Astrocyte of the cerebellum (primary cell): ENCODE measurements at regions of chr17 and their contacts with region 1.

Region 1: DNA sequence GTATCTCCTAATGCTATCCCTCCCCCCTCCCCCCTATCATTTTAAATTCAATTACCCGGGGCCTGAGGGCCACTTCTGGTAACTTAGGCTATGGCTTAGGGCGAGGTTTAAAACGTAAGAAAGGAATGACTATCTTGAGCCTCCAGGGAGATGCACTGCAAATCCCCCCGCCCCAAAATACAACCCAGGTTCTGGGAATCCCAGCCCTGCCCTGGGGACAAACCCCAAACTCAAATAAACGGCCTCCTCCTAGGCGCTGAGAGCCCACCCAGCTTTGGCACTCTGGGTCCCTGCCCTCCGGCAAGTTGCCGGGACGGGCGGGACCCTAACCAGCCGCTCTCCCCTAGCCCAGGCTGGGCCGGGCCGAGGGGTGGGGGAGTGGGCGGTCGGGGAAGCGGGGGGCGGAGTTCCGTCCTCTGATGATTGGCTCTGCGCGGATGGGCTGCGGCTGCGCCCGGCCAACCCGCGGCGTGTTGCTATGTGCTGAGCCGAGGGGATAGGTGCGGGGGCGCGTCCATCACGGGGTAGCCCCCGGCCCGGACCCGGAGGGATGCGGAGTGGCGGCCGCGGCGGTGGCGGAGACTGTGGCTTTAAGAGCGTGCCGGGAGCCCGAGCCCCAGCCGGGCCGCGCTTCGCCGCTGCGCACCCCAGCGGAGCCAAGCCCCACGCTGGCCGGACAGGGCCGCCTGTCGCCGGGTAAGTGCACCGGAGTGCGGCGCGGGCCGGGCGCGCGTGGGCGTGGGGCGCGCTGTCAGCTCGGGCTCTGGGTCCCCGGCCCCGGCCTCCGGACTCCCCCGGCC is at the start of gene YPEL2:
- DNase-seq: peak; percentile 87
- H3K4me3 ChIP-seq: peak within 1 kb of the TSS; percentile 74
- CTCF ChIP-seq: no peak

Region 2: DNA sequence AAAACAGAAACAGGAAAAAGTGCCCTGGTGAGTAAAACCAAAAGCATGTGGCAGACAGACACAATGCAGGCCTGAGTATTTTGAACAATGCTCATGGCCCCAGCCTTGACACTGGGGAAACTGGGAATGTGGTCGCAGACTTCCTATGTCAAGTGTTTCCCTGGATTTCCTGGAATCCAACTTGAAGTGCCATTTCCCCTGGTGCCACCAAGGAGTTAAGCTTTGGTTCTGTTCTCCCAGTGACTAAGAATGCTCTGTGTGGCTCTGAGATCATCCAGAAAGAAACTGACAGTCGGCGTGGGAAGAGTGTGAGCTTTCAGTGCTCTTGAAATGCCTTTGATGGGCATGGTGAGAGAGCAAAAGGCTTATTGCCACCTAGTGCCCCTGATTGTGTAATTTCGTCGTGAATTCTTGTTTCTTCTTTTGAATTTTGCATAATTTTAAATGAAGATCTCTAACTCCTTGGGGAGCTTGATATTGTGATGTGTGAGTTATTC is 96.1 kb after region 1 on chr17:
- in situ Hi-C with region 1: loop called (anchors 5 kb)
- DNase-seq: no peak
- H3K4me3 ChIP-seq: no peak overlapping the region
- CTCF ChIP-seq: no peak